Vagina (tissue), 2 donors: ENCODE measurements at regions of chr1 and their contacts with region 1.

Region 1: GRCh38 chr1:27725374-27726173 is at the start of gene FAM76A:
- DNase-seq: peak; percentile 98 to 99
- H3K4me3 ChIP-seq: peak within 1 kb of the TSS; percentile 87 to 93
- H3K27ac ChIP-seq: peak within 1 kb of the TSS; percentile 92
- H3K4me1 ChIP-seq: peaks cover 20% of the 10 kb centered on the region
- H3K27me3 ChIP-seq: no peaks in the 10 kb centered on the region
- CTCF ChIP-seq: peak in 1 of 3 experiments; percentile 48
- POLR2A ChIP-seq: peak in 1 of 2 donors; percentile 77
- total RNA-seq, gene FAM76A: 16.7 TPM

Region 2: DNA sequence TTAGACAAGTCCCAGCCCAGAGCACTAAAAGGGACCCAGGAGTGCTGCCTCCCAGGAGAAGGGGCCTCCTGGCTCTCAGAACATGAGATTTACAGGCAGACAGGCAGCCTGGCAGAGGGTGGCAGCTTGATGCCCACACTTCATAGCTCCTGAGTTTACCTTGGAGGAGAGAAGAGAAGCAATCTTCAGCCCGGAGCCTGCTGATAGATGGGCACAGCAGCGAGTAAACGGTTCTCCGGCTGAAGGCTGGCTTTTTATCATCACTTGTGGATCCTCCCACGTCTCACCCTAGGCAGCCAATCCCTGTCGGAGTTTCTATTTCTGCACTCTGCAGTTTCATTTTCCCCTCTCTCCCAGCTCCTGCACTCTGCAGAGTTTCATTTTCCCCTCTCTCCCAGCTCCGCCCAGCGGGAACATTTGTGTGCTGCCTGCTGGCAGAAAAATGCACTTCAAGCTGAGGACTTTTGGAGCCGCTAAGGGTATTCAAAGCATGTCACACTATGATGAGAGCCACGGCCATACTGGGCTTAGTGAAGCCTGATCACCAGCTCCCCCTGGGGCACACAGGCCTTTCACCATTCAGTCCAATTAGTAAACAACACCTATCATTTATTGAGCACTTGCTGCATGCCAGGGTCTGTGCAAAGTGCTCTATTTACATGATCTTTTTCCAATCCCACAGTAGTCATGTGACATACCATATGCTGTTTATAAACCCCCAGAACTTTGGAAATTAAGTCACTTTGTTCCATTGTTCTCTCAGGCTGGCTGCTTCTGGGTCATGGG is 53.4 kb before region 1 on chr1 and contains the start of gene IFI6:
- intact Hi-C with region 1: loop called (anchors 10 kb)
- DNase-seq: no peak
- H3K4me3 ChIP-seq: peak within 1 kb of the TSS; percentile 50 to 56
- H3K27ac ChIP-seq: peak within 1 kb of the TSS; percentile 93
- H3K4me1 ChIP-seq: peaks cover 37% of the 10 kb centered on the region
- H3K27me3 ChIP-seq: no peaks in the 10 kb centered on the region
- CTCF ChIP-seq: peak in 2 of 3 experiments; percentile 31 to 41
- POLR2A ChIP-seq: no peak
- total RNA-seq, gene IFI6: 28.2 TPM

Region 3: DNA sequence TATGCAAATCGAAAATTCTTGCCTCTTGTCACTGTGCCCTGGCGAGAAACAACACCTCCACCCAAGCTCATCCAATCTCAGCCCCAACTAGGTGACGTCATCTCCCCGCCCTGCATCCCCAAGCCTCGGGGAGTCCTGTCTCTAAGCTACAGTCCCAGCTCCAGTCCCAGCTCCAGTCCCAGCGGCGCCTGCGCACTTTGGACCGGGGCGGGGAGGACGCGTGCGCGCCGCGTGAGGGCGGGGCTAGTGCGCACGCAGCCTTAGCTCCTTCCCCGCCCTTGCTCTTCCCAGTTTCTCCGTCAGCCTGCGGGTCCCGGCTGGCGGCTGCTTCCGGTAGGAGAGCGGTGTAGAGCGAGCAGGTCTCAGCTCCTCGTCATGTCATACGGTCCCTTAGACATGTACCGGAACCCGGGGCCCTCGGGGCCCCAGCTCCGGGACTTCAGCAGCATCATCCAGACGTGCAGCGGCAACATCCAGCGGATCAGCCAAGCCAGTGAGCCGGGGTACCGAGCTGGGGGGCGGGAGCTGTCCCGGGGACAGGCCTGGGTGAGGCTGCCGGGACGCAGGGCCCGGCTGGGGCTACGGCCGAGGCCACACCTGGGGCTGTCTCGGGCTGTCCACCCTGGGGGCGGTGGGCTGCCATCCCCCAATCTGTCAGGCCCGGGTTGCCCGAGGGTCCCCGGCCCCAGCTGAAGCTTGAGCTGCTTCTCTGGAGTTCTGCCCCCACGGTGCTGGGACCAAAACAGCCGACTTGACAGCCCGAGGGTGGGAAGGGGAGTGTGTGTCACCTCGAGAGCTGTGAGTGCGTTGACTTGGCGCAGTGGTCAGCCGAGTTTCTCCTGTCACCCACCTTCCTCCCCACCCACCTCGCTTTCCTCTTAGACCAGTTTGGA is 47.6 kb after region 1 on chr1 and contains the start of gene STX12:
- intact Hi-C with region 1: loop called (anchors 5 kb)
- DNase-seq: peak; percentile 98 to 100
- H3K4me3 ChIP-seq: peak within 1 kb of the TSS; percentile 77 to 98
- H3K27ac ChIP-seq: peak within 1 kb of the TSS; percentile 91
- H3K4me1 ChIP-seq: peaks cover 24% of the 10 kb centered on the region
- H3K27me3 ChIP-seq: no peaks in the 10 kb centered on the region
- CTCF ChIP-seq: no peak
- POLR2A ChIP-seq: peak; percentile 13 to 88
- total RNA-seq, gene STX12: 34.6 TPM